ENCODE measurements at regions of chr5 and their contacts with region 1.

Region 1: DNA sequence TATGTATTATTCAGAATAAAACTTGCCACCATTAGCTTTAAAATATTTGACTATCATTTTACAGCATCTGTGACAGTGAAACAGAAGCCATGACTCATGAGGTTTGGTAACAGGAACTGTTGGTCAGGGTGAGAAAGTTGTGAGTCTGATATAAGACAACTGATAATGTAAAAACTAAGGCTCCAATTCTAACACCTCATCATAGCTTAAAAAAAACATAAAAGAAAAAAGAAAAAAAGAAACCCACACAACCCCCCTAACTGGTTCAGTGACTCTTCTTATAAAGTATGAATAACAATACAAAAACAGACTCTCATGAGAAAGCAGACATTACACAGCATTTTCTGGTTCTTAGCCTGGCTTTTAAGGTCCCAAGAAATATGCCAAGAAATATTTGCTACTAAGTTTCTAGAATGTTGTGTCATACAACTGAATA is 85.8 kb downstream of the MRPS27 start:
- DNase-seq: peak; percentile 25
- H3K4me3 Mint-ChIP-seq: no peak overlapping the region
- H3K27ac Mint-ChIP-seq: no peak overlapping the region
- H3K4me1 Mint-ChIP-seq: peaks cover 36% of the 10 kb centered on the region
- H3K27me3 Mint-ChIP-seq: no peaks in the 10 kb centered on the region

Region 2: GRCh38 chr5:71601222-71602041 is 632.9 kb before region 1 on chr5:
- CTCF ChIA-PET with region 1: no interaction called
- POLR2A ChIA-PET with region 1: no interaction called
- intact Hi-C with region 1: loop called (anchors 5 kb)
- DNase-seq: peak; percentile 90
- H3K4me3 Mint-ChIP-seq: peak overlapping the region; percentile 1
- H3K27ac Mint-ChIP-seq: peak overlapping the region; percentile 96
- H3K4me1 Mint-ChIP-seq: peaks cover 33% of the 10 kb centered on the region
- H3K27me3 Mint-ChIP-seq: no peaks in the 10 kb centered on the region

Region 3: GRCh38 chr5:72093217-72093616 is 141.1 kb before region 1 on chr5:
- CTCF ChIA-PET with region 1: no interaction called
- POLR2A ChIA-PET with region 1: no interaction called
- intact Hi-C with region 1: loop called (anchors 5 kb)
- DNase-seq: no peak
- H3K4me3 Mint-ChIP-seq: no peak overlapping the region
- H3K27ac Mint-ChIP-seq: no peak overlapping the region
- H3K4me1 Mint-ChIP-seq: peaks cover 11% of the 10 kb centered on the region
- H3K27me3 Mint-ChIP-seq: peaks cover 29% of the 10 kb centered on the region

Region 4: DNA sequence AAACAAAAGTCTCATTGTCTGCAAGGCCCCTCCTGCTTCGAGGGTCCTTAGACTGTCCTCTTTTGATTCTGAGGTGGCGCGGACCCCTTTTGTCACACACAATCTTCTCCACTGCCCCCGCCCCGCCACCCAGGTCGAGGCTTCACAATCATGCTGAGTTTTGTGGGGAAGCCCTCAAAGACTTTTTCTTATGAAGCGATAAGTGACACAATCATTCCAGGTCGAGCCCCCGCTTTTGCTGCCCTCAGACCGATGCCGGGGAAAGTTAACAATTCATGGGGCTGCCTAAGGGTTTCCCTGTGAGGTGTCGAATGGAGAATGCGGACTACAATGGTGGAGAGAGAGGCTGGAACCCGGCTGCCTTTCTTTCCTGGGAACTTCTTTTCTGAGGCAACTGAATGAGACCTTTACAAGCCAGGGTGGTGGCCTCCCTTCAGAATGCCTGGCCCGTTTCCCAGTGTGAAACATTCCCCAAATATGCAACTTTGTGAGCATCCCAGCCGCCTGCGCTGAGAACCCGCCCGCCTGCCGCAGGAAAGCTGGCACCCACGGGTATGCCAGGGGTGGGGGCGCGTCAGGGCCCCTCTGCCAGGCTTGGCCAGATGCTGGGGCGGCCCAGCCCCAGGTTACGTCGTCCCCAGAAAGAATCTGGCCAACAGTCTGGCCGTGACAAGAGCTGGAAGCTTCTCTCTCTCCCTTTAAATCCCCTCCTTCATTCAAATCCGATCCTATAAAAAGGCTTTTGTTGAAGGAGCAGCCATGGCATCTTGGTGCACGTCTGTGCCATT is 55.1 kb before region 1 on chr5:
- CTCF ChIA-PET with region 1: no interaction called
- POLR2A ChIA-PET with region 1: no interaction called
- intact Hi-C with region 1: loop called (anchors 10 kb)
- DNase-seq: no peak
- H3K4me3 Mint-ChIP-seq: no peak overlapping the region
- H3K27ac Mint-ChIP-seq: no peak overlapping the region
- H3K4me1 Mint-ChIP-seq: no peaks in the 10 kb centered on the region
- H3K27me3 Mint-ChIP-seq: peaks cover 43% of the 10 kb centered on the region

Region 5: GRCh38 chr5:72212171-72212570 is 22.1 kb before region 1 on chr5:
- CTCF ChIA-PET with region 1: no interaction called
- POLR2A ChIA-PET with region 1: no interaction called
- intact Hi-C with region 1: loop called (anchors 2 kb)
- DNase-seq: no peak
- H3K4me3 Mint-ChIP-seq: no peak overlapping the region
- H3K27ac Mint-ChIP-seq: no peak overlapping the region
- H3K4me1 Mint-ChIP-seq: peaks cover 9% of the 10 kb centered on the region
- H3K27me3 Mint-ChIP-seq: no peaks in the 10 kb centered on the region

Region 6: GRCh38 chr5:72307968-72308852 is 73.9 kb after region 1 on chr5:
- CTCF ChIA-PET with region 1: interaction called, 4 read pairs
- POLR2A ChIA-PET with region 1: interaction called, 4 read pairs
- intact Hi-C with region 1: loop called (anchors 2 kb)
- DNase-seq: peak; percentile 97
- H3K4me3 Mint-ChIP-seq: peak overlapping the region; percentile 89
- H3K27ac Mint-ChIP-seq: peak overlapping the region; percentile 87
- H3K4me1 Mint-ChIP-seq: peaks cover 23% of the 10 kb centered on the region
- H3K27me3 Mint-ChIP-seq: no peaks in the 10 kb centered on the region

Measured in activated CD4-positive, alpha-beta memory T cell treated with anti-CD3 and anti-CD28 coated beads for 36 hours (primary cell).